WTC11 (cell line): ENCODE measurements at regions of chr2 and their contacts with region 1.

Region 1: DNA sequence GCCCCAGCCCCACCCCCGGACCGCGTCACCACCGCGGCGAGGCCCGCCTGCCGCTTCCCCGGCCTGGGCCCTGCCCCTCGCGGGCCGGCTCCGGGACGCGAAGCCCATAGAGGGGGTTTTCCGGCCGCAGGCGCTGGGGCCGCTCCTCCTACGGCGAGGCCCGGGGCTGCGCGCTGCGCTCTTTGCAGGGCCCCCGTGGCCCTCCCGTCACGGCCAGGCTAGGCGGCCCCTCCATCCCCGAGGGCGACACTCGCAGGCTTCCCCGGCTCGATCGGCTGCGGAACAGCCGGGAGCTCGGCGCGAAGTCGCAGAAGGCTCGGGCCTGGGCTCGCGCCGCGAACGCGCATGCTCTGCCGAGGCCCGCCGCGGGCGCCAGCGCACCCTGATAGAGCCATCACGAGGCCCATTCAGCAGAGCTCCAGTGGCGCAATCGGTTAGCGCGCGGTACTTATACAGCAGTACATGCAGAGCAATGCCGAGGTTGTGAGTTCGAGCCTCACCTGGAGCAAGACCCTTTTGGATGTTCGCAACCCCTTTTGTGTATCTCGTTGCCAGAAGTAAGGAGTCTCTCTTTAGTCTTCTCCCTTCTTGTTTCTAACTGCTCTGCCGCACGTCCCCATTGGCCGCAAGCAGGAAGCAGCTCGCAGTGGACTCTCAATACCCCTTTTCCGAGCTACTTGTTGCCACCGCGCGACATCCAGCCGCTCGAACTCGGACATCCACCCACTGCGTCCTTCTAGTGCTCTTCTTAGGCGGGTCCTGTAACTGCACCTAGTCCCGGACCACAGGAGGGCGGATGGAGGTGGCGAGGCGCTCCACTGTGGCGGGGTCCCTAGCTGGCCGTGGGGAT is 18.0 kb upstream of the HAAO start:
- DNase-seq: peak; percentile 93
- ATAC-seq: peak; percentile 73
- H3K4me3 Mint-ChIP-seq: peak overlapping the region; percentile 96
- H3K27ac Mint-ChIP-seq: peak overlapping the region; percentile 97
- H3K4me1 Mint-ChIP-seq: peaks cover 15% of the 10 kb centered on the region
- H3K27me3 Mint-ChIP-seq: peaks cover 8% of the 10 kb centered on the region
- CTCF ChIP-seq: no peak

Region 2: GRCh38 chr2:42713971-42714370 is 96.4 kb before region 1 on chr2:
- CTCF ChIA-PET with region 1: no interaction called
- POLR2A ChIA-PET with region 1: no interaction called
- DNase-seq: no peak
- ATAC-seq: no peak
- H3K4me3 Mint-ChIP-seq: no peak overlapping the region
- H3K27ac Mint-ChIP-seq: no peak overlapping the region
- H3K4me1 Mint-ChIP-seq: peaks cover 13% of the 10 kb centered on the region
- H3K27me3 Mint-ChIP-seq: no peaks in the 10 kb centered on the region
- CTCF ChIP-seq: no peak

Region 3: DNA sequence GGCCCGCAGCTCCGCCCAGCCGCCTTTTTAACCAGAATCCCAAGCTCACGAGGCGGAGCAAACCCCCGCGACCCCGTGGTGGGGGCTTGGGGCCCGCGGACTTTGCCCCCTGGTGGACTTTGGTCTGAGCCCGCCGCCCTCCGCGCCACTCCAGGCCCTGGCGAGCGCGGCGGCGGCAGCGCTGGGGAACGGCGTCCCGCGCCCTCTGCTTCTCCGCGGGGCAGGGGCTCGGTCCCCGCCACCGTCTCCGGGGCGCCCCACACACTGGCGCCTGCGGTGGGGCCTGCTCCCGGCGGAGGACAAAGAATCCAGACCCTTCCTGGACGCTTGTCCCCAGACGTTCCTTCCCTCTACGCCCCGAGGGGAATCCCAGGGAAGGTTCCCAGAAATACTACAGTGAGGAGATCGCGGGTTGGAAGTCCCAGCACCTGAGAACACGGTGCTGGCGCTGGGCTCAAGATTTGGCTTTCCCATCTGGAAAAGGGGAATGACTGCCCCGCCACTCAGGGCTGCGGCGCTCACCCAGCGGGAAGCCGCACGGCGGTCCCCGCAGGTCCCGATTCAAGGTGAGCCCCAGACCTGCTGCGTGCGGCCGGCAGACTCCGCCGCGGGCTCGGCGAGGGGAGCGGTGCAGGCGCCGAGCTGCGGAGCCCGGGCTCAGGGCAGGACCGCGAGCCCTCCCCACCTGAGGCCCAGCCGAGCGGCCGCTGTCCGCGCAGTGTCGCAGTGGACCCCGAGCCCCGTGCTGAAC is 17.6 kb before region 1 on chr2 and contains the start of gene HAAO:
- CTCF ChIA-PET with region 1: interaction called, 70 read pairs
- POLR2A ChIA-PET with region 1: interaction called, 15 read pairs
- DNase-seq: peak; percentile 67
- ATAC-seq: peak; percentile 52
- H3K4me3 Mint-ChIP-seq: peak within 1 kb of the TSS; percentile 79
- H3K27ac Mint-ChIP-seq: peak within 1 kb of the TSS; percentile 40; the same call in 1 of the 2 replicates
- H3K4me1 Mint-ChIP-seq: peaks cover 39% of the 10 kb centered on the region
- H3K27me3 Mint-ChIP-seq: peaks cover 17% of the 10 kb centered on the region
- CTCF ChIP-seq: no peak
- total RNA-seq, gene HAAO: 8.0 to 9.8 TPM (median 8.4 TPM) in 3 replicates

Region 4: GRCh38 chr2:42828487-42829425 is 18.4 kb after region 1 on chr2:
- CTCF ChIA-PET with region 1: interaction called, 14 read pairs
- POLR2A ChIA-PET with region 1: no interaction called
- DNase-seq: peak; percentile 82
- ATAC-seq: peak; percentile 89
- H3K4me3 Mint-ChIP-seq: no peak overlapping the region
- H3K27ac Mint-ChIP-seq: no peak overlapping the region
- H3K4me1 Mint-ChIP-seq: 0 out of 2 replicates have a peak, but pooled peaks cover 8% of the 10 kb centered on the region
- H3K27me3 Mint-ChIP-seq: peaks cover 16% of the 10 kb centered on the region
- CTCF ChIP-seq: peak; percentile 81

Region 5: DNA sequence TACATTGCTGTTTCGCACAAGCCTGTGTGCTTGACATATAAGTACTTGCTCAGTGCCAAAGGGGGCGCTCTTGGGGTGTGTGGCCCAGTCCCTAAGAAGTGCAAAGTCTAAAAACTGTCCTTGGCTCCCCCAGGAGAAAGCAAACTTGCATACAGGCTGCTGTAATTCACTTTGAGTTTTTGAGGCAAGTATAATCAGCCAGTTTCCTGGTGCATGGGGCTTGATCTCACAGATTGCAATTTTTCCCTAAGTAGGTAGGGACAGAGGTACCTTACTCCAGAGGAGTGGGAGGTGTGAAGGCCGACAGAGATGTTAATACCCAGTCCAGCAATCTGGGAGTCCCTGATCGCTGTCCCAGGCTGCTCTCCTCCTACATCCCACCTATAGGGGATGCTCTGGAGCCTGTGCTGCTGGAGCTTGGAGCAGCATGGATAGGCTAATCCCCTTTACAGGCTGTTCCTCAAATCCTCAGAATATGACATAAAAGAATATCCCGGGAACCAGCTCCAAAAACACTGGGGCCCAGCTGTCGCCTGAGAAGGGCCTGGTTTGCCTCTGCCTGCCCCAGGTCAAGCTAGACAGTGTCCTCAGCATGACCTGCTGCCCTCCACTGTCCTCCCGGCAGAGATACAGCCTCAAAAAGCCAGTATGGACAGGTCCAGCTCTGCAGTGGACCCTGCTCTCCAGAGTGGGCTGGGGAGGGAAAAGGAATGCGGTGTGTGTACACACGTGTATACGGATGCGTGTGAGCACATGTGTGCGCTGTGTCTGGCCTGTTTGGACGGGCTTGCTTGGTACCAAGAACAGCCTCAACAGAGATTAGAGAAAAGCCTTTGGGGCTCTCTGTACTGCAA is 118.6 kb after region 1 on chr2:
- CTCF ChIA-PET with region 1: interaction called, 11 read pairs
- POLR2A ChIA-PET with region 1: no interaction called
- DNase-seq: peak; percentile 73
- ATAC-seq: peak; percentile 62
- H3K4me3 Mint-ChIP-seq: no peak overlapping the region
- H3K27ac Mint-ChIP-seq: peak overlapping the region; percentile 68; the same call in 1 of the 2 replicates
- H3K4me1 Mint-ChIP-seq: peaks cover 73% of the 10 kb centered on the region
- H3K27me3 Mint-ChIP-seq: no peaks in the 10 kb centered on the region; the same call in 1 of the 2 replicates
- CTCF ChIP-seq: peak; percentile 63